ENCODE measurements at regions of chrX and their contacts with region 1.

Region 1: DNA sequence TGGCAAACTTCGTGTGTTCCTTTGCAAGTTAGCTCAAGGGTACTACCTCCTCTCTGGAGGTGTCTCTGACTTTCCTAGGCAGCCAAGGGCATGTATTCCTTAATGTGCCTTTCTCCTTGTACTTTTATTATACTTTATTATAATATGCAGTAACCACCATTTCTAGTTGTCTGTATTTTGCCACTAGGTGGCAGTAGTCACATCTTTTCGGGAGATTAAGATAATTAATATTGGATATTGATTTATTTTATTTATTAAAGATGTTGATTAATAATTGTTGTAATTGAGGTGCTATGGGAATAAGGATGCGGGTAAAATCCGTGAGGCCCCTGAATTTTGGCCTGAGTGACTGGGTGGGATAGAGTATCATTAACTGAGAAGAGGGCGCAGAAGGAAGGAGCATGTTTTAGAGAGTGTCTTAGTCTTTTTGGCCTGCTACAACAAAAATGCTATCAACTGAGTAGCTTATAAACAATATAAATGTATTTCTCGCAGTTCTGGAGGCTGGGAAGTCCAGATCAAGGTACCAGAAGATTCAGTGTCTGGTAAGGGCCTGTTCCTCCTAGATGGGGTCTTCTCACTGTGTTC is 153.3 kb downstream of the TMEM164 start:
- DNase-seq: no peak

Region 2: DNA sequence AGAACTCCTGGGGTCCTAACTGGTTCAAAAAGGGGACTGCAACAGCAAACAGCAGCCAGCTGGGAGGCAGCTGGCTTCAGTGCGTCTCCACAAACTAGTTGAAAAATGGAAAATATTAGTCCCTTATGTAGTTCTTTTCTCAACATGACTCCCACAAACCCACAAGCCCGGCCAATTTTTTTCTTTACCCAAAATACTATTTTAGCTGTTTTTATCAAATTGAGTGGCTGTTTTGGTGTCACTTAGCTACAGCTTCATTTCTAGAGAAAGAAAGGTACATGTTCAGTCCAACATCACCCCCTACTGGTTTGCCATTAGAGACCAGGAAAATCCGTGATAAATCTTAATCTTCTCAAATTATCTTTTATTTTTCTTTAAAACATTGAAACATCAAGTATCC is 771.6 kb before region 1 on chrX:
- intact Hi-C with region 1: loop called in 1 of 2 experiments (anchors 5 kb)
- DNase-seq: no peak

Region 3: DNA sequence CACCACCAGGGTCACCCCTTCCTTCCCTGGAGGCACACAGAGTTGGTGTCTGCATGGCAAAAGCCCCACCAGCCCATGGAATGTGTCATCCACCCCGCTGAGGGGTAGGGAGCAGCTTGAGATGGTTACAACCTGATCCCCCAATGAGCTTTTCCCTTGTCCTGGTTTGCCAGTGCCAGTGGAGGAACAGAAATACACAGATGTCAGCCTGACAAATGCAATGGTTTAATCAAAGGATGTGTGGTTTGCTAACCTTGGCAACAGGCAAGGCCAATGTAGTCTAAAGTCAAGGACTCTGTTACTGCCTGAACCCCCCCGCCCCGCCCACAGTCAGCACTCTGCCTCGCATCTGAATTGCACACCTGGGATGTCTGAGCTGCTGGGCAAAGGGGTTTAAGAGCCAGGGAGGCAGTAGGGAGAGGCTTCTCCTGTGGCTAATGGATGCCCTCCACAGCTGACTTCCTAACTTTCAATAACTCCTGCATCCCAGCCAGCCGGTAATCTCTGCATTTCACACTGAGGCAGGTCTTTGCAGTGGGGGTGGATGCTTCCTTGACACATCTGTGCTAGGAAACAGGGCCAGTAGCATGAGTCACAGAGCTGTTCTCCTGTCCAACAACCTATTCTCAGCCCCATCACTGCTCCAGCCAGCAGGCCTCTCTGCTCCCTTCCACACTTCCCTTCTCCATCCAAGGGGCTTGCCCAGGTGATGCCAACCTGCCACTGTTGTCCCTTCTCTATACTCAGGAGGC is 24.1 kb after region 1 on chrX:
- intact Hi-C with region 1: no loop called
- DNase-seq: no peak